ENCODE measurements at regions of chr14 and their contacts with region 1.

Region 1: GRCh38 chr14:65195042-65195719 is 92.9 kb upstream of the MAX start:
- DNase-seq: no peak
- ATAC-seq: peak; percentile 71
- H3K4me3 Mint-ChIP-seq: peak overlapping the region; percentile 75
- H3K27ac Mint-ChIP-seq: peak overlapping the region; percentile 87
- H3K4me1 Mint-ChIP-seq: peaks cover 49% of the 10 kb centered on the region
- H3K27me3 Mint-ChIP-seq: no peaks in the 10 kb centered on the region
- CTCF ChIP-seq: no peak

Region 2: DNA sequence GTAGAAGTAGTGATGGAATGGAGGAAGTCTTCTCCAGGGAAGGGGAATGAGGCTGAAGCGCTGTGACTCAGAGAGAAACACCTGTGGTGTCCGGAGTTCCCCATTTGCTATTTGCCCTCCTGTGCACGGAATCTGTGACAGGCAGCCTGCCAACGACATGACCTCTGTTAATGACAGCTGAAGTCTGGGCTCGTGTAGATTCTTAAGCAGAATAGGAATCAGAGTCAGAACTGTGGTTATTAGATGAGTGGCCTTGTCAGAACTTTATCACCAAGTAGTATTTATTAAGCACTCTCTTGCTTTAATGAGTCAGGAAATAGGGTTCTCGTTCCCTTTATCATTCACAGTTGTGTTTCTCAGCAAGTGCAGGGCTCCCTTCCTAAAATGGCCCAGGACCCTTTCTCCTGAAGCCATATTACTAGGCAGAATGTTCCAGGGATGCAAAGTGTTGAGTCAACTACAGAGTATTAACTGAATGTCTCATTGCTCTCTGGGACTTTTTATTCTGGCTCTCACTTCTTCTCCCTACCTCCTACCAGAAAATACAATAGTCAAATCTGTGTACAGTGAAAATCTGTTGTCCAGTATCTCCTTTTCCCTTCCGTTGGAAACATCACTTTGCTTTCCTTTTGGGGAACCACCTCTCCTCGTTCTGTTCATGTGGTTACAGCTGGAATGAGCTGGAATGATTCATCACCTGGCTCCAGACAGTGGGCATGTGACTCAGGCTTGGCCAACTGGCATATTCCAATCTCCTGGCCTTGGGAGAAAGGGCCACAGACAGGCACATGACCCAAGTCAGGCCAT is 15.1 kb before region 1 on chr14:
- CTCF ChIA-PET with region 1: no interaction called
- POLR2A ChIA-PET with region 1: interaction called, 15 read pairs
- intact Hi-C with region 1: loop called (anchors 1 kb)
- DNase-seq: peak; percentile 46
- ATAC-seq: peak; percentile 93
- H3K4me3 Mint-ChIP-seq: peak overlapping the region; percentile 71
- H3K27ac Mint-ChIP-seq: peak overlapping the region; percentile 86
- H3K4me1 Mint-ChIP-seq: peaks cover 37% of the 10 kb centered on the region
- H3K27me3 Mint-ChIP-seq: no peaks in the 10 kb centered on the region
- CTCF ChIP-seq: no peak

Region 3: GRCh38 chr14:66476964-66477363 is 1281.8 kb after region 1 on chr14:
- CTCF ChIA-PET with region 1: no interaction called
- POLR2A ChIA-PET with region 1: no interaction called
- intact Hi-C with region 1: no loop called
- DNase-seq: no peak
- ATAC-seq: no peak
- H3K4me3 Mint-ChIP-seq: no peak overlapping the region
- H3K27ac Mint-ChIP-seq: no peak overlapping the region
- H3K4me1 Mint-ChIP-seq: no peaks in the 10 kb centered on the region
- H3K27me3 Mint-ChIP-seq: no peaks in the 10 kb centered on the region
- CTCF ChIP-seq: no peak

Measured in activated B cell treated with CpG ODN at 0.5 μM for 24 hours (primary cell).